A673 (cell line): ENCODE measurements at regions of chr6 and their contacts with region 1.

Region 1: GRCh38 chr6:34986845-34987246 is 97.8 kb downstream of the ANKS1A start:
- DNase-seq: peak; percentile 90
- H3K4me3 ChIP-seq: no peak overlapping the region
- H3K27ac ChIP-seq: no peak overlapping the region
- H3K4me1 ChIP-seq: peaks cover 12% of the 10 kb centered on the region
- H3K27me3 ChIP-seq: no peaks in the 10 kb centered on the region
- CTCF ChIP-seq: peak; percentile 89

Region 2: GRCh38 chr6:35202066-35202546 is 215.3 kb after region 1 on chr6:
- CTCF ChIA-PET with region 1: interaction called, 10 read pairs
- POLR2A ChIA-PET with region 1: no interaction called
- intact Hi-C with region 1: loop called (anchors 2 kb)
- DNase-seq: no peak
- H3K4me3 ChIP-seq: no peak overlapping the region
- H3K27ac ChIP-seq: no peak overlapping the region
- H3K4me1 ChIP-seq: no peaks in the 10 kb centered on the region
- H3K27me3 ChIP-seq: peaks cover 8% of the 10 kb centered on the region
- CTCF ChIP-seq: no peak